ENCODE measurements at regions of chr7 and their contacts with region 1.

Region 1: DNA sequence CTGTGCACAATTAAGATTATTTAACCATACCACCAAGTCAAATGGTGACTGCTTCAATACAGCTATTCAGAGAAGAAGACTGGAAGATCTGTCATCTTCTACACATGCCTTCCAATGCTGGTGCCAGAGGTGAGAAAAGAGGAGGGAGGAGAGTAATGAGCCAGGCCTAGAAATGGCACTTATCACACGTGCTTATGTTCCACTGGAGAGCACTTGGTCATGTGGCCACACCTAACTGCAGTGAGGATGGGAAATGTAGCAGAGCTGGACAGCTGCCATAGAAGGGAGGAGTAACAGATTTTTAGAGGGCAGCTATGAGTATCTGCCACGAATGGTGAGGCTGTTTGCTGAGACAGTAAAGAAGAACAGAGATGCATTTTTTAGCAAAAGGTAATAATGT is 77.1 kb downstream of the MPLKIP start:
- DNase-seq: no peak
- H3K4me3 ChIP-seq: no peak overlapping the region
- H3K4me3 Mint-ChIP-seq: no peak overlapping the region
- H3K27ac ChIP-seq: no peak overlapping the region
- H3K27ac Mint-ChIP-seq: peak overlapping the region in 4 of 8 donors; percentile 25 to 53 (median 41)
- H3K4me1 ChIP-seq: no peaks in the 10 kb centered on the region
- H3K4me1 Mint-ChIP-seq: peaks cover 12 to 26% (median 17%) of the 10 kb centered on the region in 3 donors
- H3K27me3 ChIP-seq: no peaks in the 10 kb centered on the region
- H3K27me3 Mint-ChIP-seq: no peaks in the 10 kb centered on the region

Region 2: GRCh38 chr7:39967406-39968161 is 89.7 kb before region 1 on chr7:
- CTCF ChIA-PET with region 1: no interaction called
- POLR2A ChIA-PET with region 1: no interaction called
- DNase-seq: no peak
- H3K4me3 ChIP-seq: no peak overlapping the region
- H3K4me3 Mint-ChIP-seq: peak overlapping the region in 5 of 7 donors; percentile 19 to 54 (median 34)
- H3K27ac ChIP-seq: no peak overlapping the region
- H3K27ac Mint-ChIP-seq: peak overlapping the region in 2 of 8 donors; percentile 35 to 47
- H3K4me1 ChIP-seq: peaks cover 30% of the 10 kb centered on the region
- H3K4me1 Mint-ChIP-seq: peaks cover 86 to 100% (median 99%) of the 10 kb centered on the region in 3 donors
- H3K27me3 ChIP-seq: no peaks in the 10 kb centered on the region
- H3K27me3 Mint-ChIP-seq: no peaks in the 10 kb centered on the region

Region 3: GRCh38 chr7:40041456-40041855 is 15.8 kb before region 1 on chr7:
- CTCF ChIA-PET with region 1: interaction called, 14 read pairs
- POLR2A ChIA-PET with region 1: no interaction called
- DNase-seq: no peak
- H3K4me3 ChIP-seq: no peak overlapping the region
- H3K4me3 Mint-ChIP-seq: no peak overlapping the region
- H3K27ac ChIP-seq: no peak overlapping the region
- H3K27ac Mint-ChIP-seq: no peak overlapping the region
- H3K4me1 ChIP-seq: no peaks in the 10 kb centered on the region
- H3K4me1 Mint-ChIP-seq: peaks cover 15 to 35% (median 25%) of the 10 kb centered on the region in 3 donors
- H3K27me3 ChIP-seq: no peaks in the 10 kb centered on the region
- H3K27me3 Mint-ChIP-seq: no peaks in the 10 kb centered on the region

Region 4: GRCh38 chr7:40072268-40072667 is 15.0 kb after region 1 on chr7:
- CTCF ChIA-PET with region 1: no interaction called
- POLR2A ChIA-PET with region 1: no interaction called
- DNase-seq: no peak
- H3K4me3 ChIP-seq: no peak overlapping the region
- H3K4me3 Mint-ChIP-seq: no peak overlapping the region
- H3K27ac ChIP-seq: no peak overlapping the region
- H3K27ac Mint-ChIP-seq: no peak overlapping the region
- H3K4me1 ChIP-seq: no peaks in the 10 kb centered on the region
- H3K4me1 Mint-ChIP-seq: peaks cover 0 to 5% (median 2%) of the 10 kb centered on the region in 3 donors
- H3K27me3 ChIP-seq: no peaks in the 10 kb centered on the region
- H3K27me3 Mint-ChIP-seq: peaks cover 0 to 2% of the 10 kb centered on the region in 2 donors

Region 5: GRCh38 chr7:40120020-40120419 is 62.7 kb after region 1 on chr7:
- CTCF ChIA-PET with region 1: no interaction called
- POLR2A ChIA-PET with region 1: no interaction called
- DNase-seq: no peak
- H3K4me3 ChIP-seq: no peak overlapping the region
- H3K4me3 Mint-ChIP-seq: no peak overlapping the region
- H3K27ac ChIP-seq: no peak overlapping the region
- H3K27ac Mint-ChIP-seq: peak overlapping the region in 2 of 8 donors; percentile 23 to 35
- H3K4me1 ChIP-seq: no peaks in the 10 kb centered on the region
- H3K4me1 Mint-ChIP-seq: peaks cover 0 to 6% (median 3%) of the 10 kb centered on the region in 3 donors
- H3K27me3 ChIP-seq: no peaks in the 10 kb centered on the region
- H3K27me3 Mint-ChIP-seq: no peaks in the 10 kb centered on the region

Region 6: DNA sequence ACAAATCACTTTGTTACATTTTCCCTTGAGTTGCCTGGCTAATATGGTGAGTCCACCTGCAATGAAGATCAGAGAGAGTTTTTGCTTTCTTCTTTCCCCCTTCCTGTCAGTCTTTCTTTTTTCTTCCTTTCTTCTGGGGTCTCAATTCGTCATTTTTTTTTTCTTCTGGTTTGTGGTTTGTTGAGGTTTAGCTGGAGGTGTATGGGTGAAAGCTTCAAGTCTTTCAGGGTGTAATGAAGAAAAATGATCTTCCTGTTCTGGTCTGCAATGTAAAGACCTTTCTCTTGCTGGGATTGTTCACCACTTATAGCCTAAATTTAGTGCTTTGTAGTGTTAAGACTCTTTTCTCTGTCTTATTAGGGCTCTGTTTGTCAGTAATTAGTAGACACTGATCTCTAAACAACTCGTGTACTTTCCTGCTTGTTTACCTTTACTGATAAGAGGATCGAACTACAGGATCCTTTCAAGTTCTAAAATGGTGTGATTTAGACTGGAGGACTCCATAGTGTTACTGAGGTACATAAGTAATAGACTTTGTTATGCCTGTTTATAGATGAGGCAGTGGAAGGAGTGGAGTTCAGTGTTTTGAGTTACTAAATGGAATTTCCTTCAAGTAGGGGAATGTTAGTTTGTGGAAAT is 206.6 kb after region 1 on chr7:
- CTCF ChIA-PET with region 1: no interaction called
- POLR2A ChIA-PET with region 1: no interaction called
- DNase-seq: peak in 1 of 5 donors; percentile 4
- H3K4me3 ChIP-seq: no peak overlapping the region
- H3K4me3 Mint-ChIP-seq: peak overlapping the region in 1 of 7 donors; percentile 4
- H3K27ac ChIP-seq: no peak overlapping the region
- H3K27ac Mint-ChIP-seq: peak overlapping the region in 1 of 8 donors; percentile 7
- H3K4me1 ChIP-seq: no peaks in the 10 kb centered on the region
- H3K4me1 Mint-ChIP-seq: peaks cover 4 to 14% (median 6%) of the 10 kb centered on the region in 3 donors
- H3K27me3 ChIP-seq: no peaks in the 10 kb centered on the region
- H3K27me3 Mint-ChIP-seq: no peaks in the 10 kb centered on the region